Heart left ventricle (tissue), 16 donors: ENCODE measurements at regions of chr3 and their contacts with region 1.

Region 1: GRCh38 chr3:21484057-21484827 is 266.8 kb downstream of the ZNF385D start:
- DNase-seq: peak; percentile 39 to 57 (median 46)
- ATAC-seq: peak in 3 of 4 donors; percentile 33 to 44 (median 41)
- H3K4me3 ChIP-seq: no peak overlapping the region
- H3K27ac ChIP-seq: no peak overlapping the region
- H3K4me1 ChIP-seq: peaks cover 0 to 3% (median 0%) of the 10 kb centered on the region in 12 donors
- H3K27me3 ChIP-seq: no peaks in the 10 kb centered on the region
- CTCF ChIP-seq: peak; percentile 45 to 73 (median 58)
- POLR2A ChIP-seq: no peak

Region 2: GRCh38 chr3:20683910-20684309 is 800.3 kb before region 1 on chr3:
- intact Hi-C with region 1: loop called in 1 of 10 experiments (anchors 10 kb)
- DNase-seq: peak in 4 of 5 donors; percentile 21 to 61 (median 42)
- ATAC-seq: peak; percentile 67 to 97 (median 80)
- H3K4me3 ChIP-seq: no peak overlapping the region
- H3K27ac ChIP-seq: peak overlapping the region in 7 of 12 donors; percentile 25 to 62 (median 45)
- H3K4me1 ChIP-seq: peaks cover 0 to 22% (median 7%) of the 10 kb centered on the region in 12 donors
- H3K27me3 ChIP-seq: no peaks in the 10 kb centered on the region
- CTCF ChIP-seq: no peak
- POLR2A ChIP-seq: no peak

Region 3: GRCh38 chr3:21290557-21290956 is 193.7 kb before region 1 on chr3:
- intact Hi-C with region 1: loop called in 1 of 10 experiments (anchors 10 kb)
- DNase-seq: no peak
- ATAC-seq: no peak
- H3K4me3 ChIP-seq: no peak overlapping the region
- H3K27ac ChIP-seq: no peak overlapping the region
- H3K4me1 ChIP-seq: no peaks in the 10 kb centered on the region
- H3K27me3 ChIP-seq: no peaks in the 10 kb centered on the region
- CTCF ChIP-seq: peak in 11 of 12 donors; percentile 27 to 64 (median 48)
- POLR2A ChIP-seq: no peak

Region 4: GRCh38 chr3:21894459-21895340 is 410.5 kb after region 1 on chr3:
- intact Hi-C with region 1: loop called in 1 of 10 experiments (anchors 10 kb)
- DNase-seq: peak in 1 of 5 donors; percentile 24
- ATAC-seq: peak; percentile 30 to 62 (median 50)
- H3K4me3 ChIP-seq: peak overlapping the region in 1 of 12 donors; percentile 15
- H3K27ac ChIP-seq: peak overlapping the region in 3 of 12 donors; percentile 16 to 39 (median 21)
- H3K4me1 ChIP-seq: peaks cover 0 to 24% (median 4%) of the 10 kb centered on the region in 12 donors
- H3K27me3 ChIP-seq: no peaks in the 10 kb centered on the region
- CTCF ChIP-seq: peak; percentile 45 to 84 (median 70)
- POLR2A ChIP-seq: no peak